Naive thymus-derived CD4-positive, alpha-beta T cell (primary cell): ENCODE measurements at regions of chr3 and their contacts with region 1.

Region 1: DNA sequence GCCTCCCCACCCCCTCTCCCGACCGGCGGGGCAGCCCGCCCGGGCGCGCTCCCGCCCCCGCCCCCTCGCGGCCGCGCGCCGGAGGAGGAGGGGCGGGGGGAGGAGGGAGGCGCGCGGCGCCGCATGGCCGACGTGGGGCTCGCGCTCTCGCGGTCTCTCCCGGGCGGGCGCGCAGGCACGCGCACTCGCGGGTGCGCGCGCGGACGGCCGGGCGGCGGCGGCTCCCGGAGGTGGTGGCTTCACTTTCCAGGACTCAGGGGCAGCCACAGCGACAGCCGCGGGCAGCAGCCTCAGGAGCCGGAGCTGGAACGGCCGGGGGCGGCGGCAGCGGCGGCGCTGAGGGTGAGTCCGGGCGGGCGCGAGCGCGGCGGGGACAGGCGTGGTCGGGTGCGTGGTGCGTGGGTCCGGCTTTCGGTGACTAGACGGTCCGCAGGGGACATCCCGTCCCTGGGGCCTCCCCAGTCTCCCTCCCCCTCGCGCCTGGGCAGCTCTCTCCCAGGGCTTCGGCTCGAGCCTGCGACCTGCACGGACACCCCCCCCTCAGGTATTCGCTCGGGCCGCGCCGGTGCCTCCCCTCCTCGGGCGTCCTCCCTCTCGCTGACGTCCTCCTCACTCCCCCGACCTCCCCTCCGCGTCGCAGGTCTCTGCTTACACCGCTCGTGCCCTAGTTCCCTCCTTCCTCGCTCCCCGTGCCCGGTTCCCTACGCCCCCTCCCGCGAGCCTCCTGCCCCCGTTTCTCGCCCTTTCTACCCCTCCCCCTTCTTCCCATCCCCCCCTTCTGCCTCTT is at the start of gene UBE2E2:
- DNase-seq: peak; percentile 54 to 76 (median 72)
- ATAC-seq: peak; percentile 89
- H3K4me3 ChIP-seq: peak within 1 kb of the TSS; percentile 68
- H3K4me3 Mint-ChIP-seq: peak within 1 kb of the TSS; percentile 87 to 98 (median 94)
- H3K27ac ChIP-seq: peak within 1 kb of the TSS; percentile 76
- H3K27ac Mint-ChIP-seq: peak within 1 kb of the TSS; percentile 48 to 94 (median 85)
- H3K4me1 ChIP-seq: peaks cover 0 to 4% of the 10 kb centered on the region in 2 donors
- H3K4me1 Mint-ChIP-seq: peaks cover 14 to 32% (median 21%) of the 10 kb centered on the region in 7 donors
- H3K27me3 ChIP-seq: peaks cover 0 to 8% of the 10 kb centered on the region in 2 donors
- H3K27me3 Mint-ChIP-seq: peaks cover 0 to 38% (median 5%) of the 10 kb centered on the region in 5 donors
- total RNA-seq, gene UBE2E2: 2.4 to 28.8 (median 10.9) TPM

Region 2: DNA sequence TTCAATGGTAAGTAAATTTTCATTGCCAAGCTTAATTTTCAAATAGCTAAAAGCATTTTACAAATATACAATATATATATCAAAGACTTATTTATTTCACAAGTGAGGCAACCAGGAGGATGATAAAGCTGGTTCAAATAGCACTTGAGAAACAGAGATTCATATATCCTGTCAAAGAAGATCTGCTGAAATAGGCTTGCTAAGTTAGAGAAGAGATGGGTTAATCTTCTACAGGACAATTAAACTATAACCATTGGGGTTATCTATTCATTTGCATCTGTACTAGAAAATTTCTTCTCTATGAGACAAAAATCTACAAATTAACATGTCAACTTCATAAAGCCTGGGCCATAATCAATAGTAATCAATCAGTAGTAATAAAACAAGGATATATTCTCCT is 637.7 kb before region 1 on chr3:
- CTCF ChIA-PET with region 1: no interaction called
- POLR2A ChIA-PET with region 1: no interaction called
- intact Hi-C with region 1: no loop called
- DNase-seq: no peak
- ATAC-seq: no peak
- H3K4me3 ChIP-seq: no peak overlapping the region
- H3K4me3 Mint-ChIP-seq: no peak overlapping the region
- H3K27ac ChIP-seq: no peak overlapping the region
- H3K27ac Mint-ChIP-seq: no peak overlapping the region
- H3K4me1 ChIP-seq: no peaks in the 10 kb centered on the region
- H3K4me1 Mint-ChIP-seq: no peaks in the 10 kb centered on the region
- H3K27me3 ChIP-seq: no peaks in the 10 kb centered on the region
- H3K27me3 Mint-ChIP-seq: peaks cover 0 to 3% (median 0%) of the 10 kb centered on the region in 5 donors

Region 3: DNA sequence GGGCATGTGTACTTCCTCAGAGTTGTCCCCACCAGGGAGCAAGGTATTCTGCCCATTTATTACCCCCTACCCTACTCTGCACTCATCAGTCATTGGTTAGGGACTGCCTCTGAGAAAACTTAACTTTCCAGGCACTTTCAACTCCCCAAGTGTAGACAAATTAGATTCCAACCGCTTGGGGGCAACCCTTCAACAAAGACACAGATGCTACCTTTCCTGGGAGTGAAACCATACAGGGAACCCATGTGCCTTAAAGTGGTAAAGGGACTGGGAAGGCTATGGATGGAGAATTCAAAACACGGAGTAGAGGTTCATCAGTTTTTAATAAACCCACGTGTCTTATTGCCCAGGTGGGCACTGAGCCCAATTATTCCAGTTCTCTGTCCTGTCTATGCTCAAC is 19.4 kb before region 1 on chr3:
- CTCF ChIA-PET with region 1: no interaction called
- POLR2A ChIA-PET with region 1: no interaction called
- intact Hi-C with region 1: no loop called
- DNase-seq: no peak
- ATAC-seq: no peak
- H3K4me3 ChIP-seq: no peak overlapping the region
- H3K4me3 Mint-ChIP-seq: no peak overlapping the region
- H3K27ac ChIP-seq: no peak overlapping the region
- H3K27ac Mint-ChIP-seq: no peak overlapping the region
- H3K4me1 ChIP-seq: no peaks in the 10 kb centered on the region
- H3K4me1 Mint-ChIP-seq: peaks cover 0 to 2% (median 0%) of the 10 kb centered on the region in 7 donors
- H3K27me3 ChIP-seq: no peaks in the 10 kb centered on the region
- H3K27me3 Mint-ChIP-seq: peaks cover 0 to 10% (median 4%) of the 10 kb centered on the region in 5 donors

Region 4: DNA sequence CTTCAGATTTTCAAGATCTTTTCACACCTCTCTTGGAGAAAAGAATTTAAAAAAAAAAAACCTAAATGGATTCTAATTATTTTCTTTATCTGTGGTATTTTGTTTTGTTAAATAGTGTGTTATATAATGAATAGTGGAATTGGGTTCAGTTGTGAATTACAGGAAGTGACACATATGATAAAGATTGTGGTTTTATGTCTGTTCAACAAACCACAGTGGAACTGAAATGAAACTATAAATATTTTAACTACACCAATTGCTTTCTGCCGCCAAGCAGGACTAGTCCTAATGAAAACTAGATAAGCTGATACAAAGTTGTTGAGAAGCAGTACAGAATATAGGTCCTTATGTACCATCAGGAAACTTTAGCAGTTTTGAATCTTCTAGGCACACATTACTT is 121.6 kb after region 1 on chr3:
- CTCF ChIA-PET with region 1: no interaction called
- POLR2A ChIA-PET with region 1: no interaction called
- intact Hi-C with region 1: loop called in 1 of 2 experiments (anchors 2 kb)
- DNase-seq: peak in 6 of 9 donors; percentile 13 to 42 (median 34)
- ATAC-seq: peak; percentile 60
- H3K4me3 ChIP-seq: no peak overlapping the region
- H3K4me3 Mint-ChIP-seq: peak overlapping the region in 8 of 10 donors; percentile 70 to 78 (median 76)
- H3K27ac ChIP-seq: no peak overlapping the region
- H3K27ac Mint-ChIP-seq: peak overlapping the region in 8 of 9 donors; percentile 27 to 84 (median 68)
- H3K4me1 ChIP-seq: peaks cover 0 to 18% of the 10 kb centered on the region in 2 donors
- H3K4me1 Mint-ChIP-seq: peaks cover 0 to 41% (median 34%) of the 10 kb centered on the region in 7 donors
- H3K27me3 ChIP-seq: no peaks in the 10 kb centered on the region
- H3K27me3 Mint-ChIP-seq: no peaks in the 10 kb centered on the region

Region 5: GRCh38 chr3:23442598-23443383 is 239.7 kb after region 1 on chr3:
- CTCF ChIA-PET with region 1: no interaction called
- POLR2A ChIA-PET with region 1: no interaction called
- intact Hi-C with region 1: loop called in 1 of 2 experiments (anchors 1 kb)
- DNase-seq: peak in 7 of 9 donors; percentile 11 to 48 (median 40)
- ATAC-seq: peak; percentile 90
- H3K4me3 ChIP-seq: no peak overlapping the region
- H3K4me3 Mint-ChIP-seq: peak overlapping the region in 9 of 10 donors; percentile 5 to 65 (median 32)
- H3K27ac ChIP-seq: no peak overlapping the region
- H3K27ac Mint-ChIP-seq: peak overlapping the region in 2 of 9 donors; percentile 5 to 78
- H3K4me1 ChIP-seq: peaks cover 0 to 26% of the 10 kb centered on the region in 2 donors
- H3K4me1 Mint-ChIP-seq: peaks cover 20 to 60% (median 49%) of the 10 kb centered on the region in 7 donors
- H3K27me3 ChIP-seq: no peaks in the 10 kb centered on the region
- H3K27me3 Mint-ChIP-seq: peaks cover 0 to 9% (median 0%) of the 10 kb centered on the region in 5 donors

Region 6: GRCh38 chr3:23916886-23917678 is 714.0 kb after region 1 on chr3 and contains the starts of genes NKIRAS1 and RPL15:
- CTCF ChIA-PET with region 1: no interaction called
- POLR2A ChIA-PET with region 1: interaction called, 3 read pairs
- intact Hi-C with region 1: loop called (anchors 10 kb)
- DNase-seq: peak; percentile 90 to 98 (median 97)
- ATAC-seq: peak; percentile 97
- H3K4me3 ChIP-seq: peak within 1 kb of the TSS; percentile 88
- H3K4me3 Mint-ChIP-seq: peak within 1 kb of the TSS; percentile 92 to 100 (median 98)
- H3K27ac ChIP-seq: peak within 1 kb of the TSS; percentile 83
- H3K27ac Mint-ChIP-seq: peak within 1 kb of the TSS; percentile 97 to 99 (median 98)
- H3K4me1 ChIP-seq: peaks cover 14 to 18% of the 10 kb centered on the region in 2 donors
- H3K4me1 Mint-ChIP-seq: peaks cover 33 to 52% (median 49%) of the 10 kb centered on the region in 7 donors
- H3K27me3 ChIP-seq: no peaks in the 10 kb centered on the region
- H3K27me3 Mint-ChIP-seq: peaks cover 0 to 4% (median 0%) of the 10 kb centered on the region in 5 donors
- total RNA-seq, gene NKIRAS1: 2.2 to 6.4 (median 3.2) TPM
- total RNA-seq, gene RPL15: 1,489 to 2,250 (median 2,129) TPM

Region 7: GRCh38 chr3:23945903-23946751 is 743.0 kb after region 1 on chr3:
- CTCF ChIA-PET with region 1: no interaction called
- POLR2A ChIA-PET with region 1: no interaction called
- intact Hi-C with region 1: loop called (anchors 1 to 10 kb)
- DNase-seq: peak; percentile 93 to 98 (median 97)
- ATAC-seq: peak; percentile 89
- H3K4me3 ChIP-seq: peak overlapping the region; percentile 79
- H3K4me3 Mint-ChIP-seq: peak overlapping the region; percentile 70 to 90 (median 87)
- H3K27ac ChIP-seq: peak overlapping the region; percentile 81
- H3K27ac Mint-ChIP-seq: peak overlapping the region; percentile 53 to 95 (median 90)
- H3K4me1 ChIP-seq: peaks cover 28 to 31% of the 10 kb centered on the region in 2 donors
- H3K4me1 Mint-ChIP-seq: peaks cover 30 to 61% (median 48%) of the 10 kb centered on the region in 7 donors
- H3K27me3 ChIP-seq: no peaks in the 10 kb centered on the region
- H3K27me3 Mint-ChIP-seq: peaks cover 0 to 41% (median 0%) of the 10 kb centered on the region in 5 donors